ENCODE measurements at regions of chr5 and their contacts with region 1.

Region 1: DNA sequence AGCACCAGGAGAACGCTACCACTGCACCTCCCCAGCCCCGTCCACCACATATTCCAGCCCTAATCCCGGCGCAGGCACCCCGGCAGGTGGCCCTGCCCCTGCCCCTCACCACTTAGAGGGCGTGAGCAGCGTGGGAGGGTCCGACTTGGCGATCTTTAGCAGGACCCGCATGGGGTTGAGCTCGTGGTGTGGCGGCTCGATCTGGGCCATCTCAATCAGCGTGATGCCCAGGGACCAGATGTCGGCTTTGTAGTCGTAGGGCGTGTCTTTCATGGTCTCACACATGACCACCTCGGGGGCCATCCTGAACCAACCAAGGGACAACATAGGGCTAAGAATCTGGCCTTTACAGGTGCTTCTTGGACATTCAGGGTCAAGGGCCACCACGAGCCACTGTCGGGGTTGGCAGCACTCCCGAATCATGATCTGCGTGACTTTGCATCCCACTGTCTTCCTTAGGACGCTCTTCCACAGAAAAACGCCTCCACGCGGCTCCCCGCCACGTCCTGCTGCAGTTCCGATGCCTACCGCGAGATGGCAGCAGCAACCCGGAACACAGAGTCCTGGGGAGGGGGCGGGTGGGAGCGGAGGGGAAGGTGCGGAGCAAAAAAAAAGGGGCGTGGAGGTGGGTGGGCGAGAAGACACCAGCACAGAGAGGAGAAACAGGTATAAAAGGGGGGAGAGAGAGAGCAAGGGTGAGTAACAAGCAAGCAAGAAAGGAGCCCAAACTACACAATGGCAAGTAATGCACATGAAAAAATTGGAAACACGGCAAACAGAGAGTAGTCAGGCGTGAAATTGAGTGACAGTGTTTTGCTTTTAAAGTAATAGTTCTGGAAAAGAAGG is 81.3 kb downstream of the STK10 start:
- DNase-seq: peak; percentile 61 to 83
- H3K4me3 ChIP-seq: peak overlapping the region; percentile 2; the same call in 1 of the 2 replicates
- H3K4me3 Mint-ChIP-seq: peak overlapping the region; percentile 64
- H3K27ac Mint-ChIP-seq: peak overlapping the region; percentile 39
- H3K4me1 ChIP-seq: peaks cover 16% of the 10 kb centered on the region; the same call in 1 of the 2 replicates
- H3K4me1 Mint-ChIP-seq: peaks cover 7% of the 10 kb centered on the region
- H3K27me3 ChIP-seq: no peaks in the 10 kb centered on the region
- H3K27me3 Mint-ChIP-seq: no peaks in the 10 kb centered on the region
- CTCF ChIP-seq: peak; percentile 96 to 99

Region 2: DNA sequence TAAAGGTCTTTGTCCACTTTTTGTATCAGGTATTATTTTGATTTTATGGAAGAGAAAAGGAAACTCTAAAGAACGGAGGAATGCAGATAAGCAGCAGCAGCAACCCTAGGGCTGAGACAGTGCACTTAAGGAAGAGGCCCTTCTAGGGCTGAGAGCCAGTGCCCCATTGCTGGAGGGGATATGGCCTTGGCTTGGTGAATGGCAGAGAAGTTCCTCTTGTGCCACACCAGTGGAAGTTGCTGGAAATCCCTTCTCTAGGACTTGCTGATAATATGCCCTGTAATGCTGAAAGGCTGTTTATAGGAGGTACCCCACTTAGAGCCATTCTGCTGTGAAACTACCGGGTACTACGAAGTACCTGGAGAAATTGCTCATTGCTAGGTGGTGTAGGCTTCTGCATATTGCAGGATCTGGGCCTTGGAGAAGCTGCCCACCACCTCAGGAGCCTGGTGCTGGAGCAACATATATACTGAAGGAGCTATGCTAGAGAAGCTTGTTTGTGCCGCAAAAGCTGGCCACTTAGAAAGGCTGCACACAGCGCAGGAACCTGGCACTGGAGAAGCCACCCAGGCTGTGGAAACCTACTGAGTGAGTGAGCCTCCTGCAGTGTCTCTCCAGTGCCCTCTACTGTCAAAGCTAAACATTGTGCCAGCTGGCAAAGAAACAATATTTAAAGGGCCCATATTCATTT is 186.5 kb after region 1 on chr5:
- CTCF ChIA-PET with region 1: interaction called, 3 read pairs
- POLR2A ChIA-PET with region 1: no interaction called
- intact Hi-C with region 1: loop called (anchors 1 kb)
- DNase-seq: peak; percentile 67 to 73
- H3K4me3 ChIP-seq: no peak overlapping the region
- H3K4me3 Mint-ChIP-seq: no peak overlapping the region
- H3K27ac Mint-ChIP-seq: no peak overlapping the region
- H3K4me1 ChIP-seq: no peaks in the 10 kb centered on the region
- H3K4me1 Mint-ChIP-seq: no peaks in the 10 kb centered on the region
- H3K27me3 ChIP-seq: no peaks in the 10 kb centered on the region
- H3K27me3 Mint-ChIP-seq: no peaks in the 10 kb centered on the region
- CTCF ChIP-seq: peak; percentile 87 to 88

Region 3: DNA sequence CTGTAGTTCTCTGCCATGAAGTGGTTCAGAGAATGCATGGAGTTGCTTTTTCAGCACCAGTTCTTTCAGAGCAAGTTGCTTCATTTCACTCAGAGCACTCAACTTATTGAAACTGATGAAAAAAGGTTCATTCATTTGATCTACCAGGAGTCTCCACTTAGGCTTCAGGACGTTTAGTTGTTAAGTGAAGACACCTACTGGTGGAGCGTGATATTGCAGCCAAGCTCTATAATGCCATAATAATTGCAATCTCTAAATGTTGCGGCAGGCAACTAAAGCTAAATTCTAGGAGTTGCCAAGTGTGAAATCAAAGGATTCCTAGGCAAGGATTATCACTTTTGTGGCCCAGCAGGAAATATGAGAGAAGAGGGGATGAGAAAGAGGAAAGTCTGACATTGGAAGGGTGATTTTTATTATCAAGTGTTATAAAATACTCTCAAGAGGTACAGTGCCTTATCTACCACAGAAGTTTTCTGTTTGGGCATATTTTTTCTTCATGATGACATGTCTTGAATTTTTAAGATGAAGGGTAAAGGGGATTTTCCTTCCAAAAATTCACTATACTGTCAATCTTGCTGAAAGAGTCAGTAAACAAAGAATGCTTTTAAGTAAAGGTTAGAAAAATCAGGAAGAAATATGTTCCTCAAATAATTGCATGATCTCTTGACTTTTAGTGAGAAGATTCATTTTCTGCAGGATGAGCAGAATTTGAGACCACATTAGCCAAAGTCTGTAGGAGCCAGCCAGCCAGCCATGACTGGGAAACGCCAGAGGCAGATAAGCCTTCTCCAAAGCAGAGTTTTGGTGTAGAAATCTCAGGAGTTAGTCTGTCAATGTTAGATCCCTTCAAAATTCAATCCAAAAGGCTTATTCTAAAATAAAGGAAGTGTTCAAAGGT is 264.2 kb after region 1 on chr5:
- CTCF ChIA-PET with region 1: no interaction called
- POLR2A ChIA-PET with region 1: no interaction called
- intact Hi-C with region 1: loop called (anchors 10 kb)
- DNase-seq: peak in 1 of 2 experiments; percentile 62
- H3K4me3 ChIP-seq: no peak overlapping the region
- H3K4me3 Mint-ChIP-seq: no peak overlapping the region
- H3K27ac Mint-ChIP-seq: no peak overlapping the region
- H3K4me1 ChIP-seq: no peaks in the 10 kb centered on the region
- H3K4me1 Mint-ChIP-seq: no peaks in the 10 kb centered on the region
- H3K27me3 ChIP-seq: no peaks in the 10 kb centered on the region
- H3K27me3 Mint-ChIP-seq: no peaks in the 10 kb centered on the region
- CTCF ChIP-seq: peak; percentile 31 to 78